Heart left ventricle (tissue), 16 donors: ENCODE measurements at regions of chrX and their contacts with region 1.

Region 1: DNA sequence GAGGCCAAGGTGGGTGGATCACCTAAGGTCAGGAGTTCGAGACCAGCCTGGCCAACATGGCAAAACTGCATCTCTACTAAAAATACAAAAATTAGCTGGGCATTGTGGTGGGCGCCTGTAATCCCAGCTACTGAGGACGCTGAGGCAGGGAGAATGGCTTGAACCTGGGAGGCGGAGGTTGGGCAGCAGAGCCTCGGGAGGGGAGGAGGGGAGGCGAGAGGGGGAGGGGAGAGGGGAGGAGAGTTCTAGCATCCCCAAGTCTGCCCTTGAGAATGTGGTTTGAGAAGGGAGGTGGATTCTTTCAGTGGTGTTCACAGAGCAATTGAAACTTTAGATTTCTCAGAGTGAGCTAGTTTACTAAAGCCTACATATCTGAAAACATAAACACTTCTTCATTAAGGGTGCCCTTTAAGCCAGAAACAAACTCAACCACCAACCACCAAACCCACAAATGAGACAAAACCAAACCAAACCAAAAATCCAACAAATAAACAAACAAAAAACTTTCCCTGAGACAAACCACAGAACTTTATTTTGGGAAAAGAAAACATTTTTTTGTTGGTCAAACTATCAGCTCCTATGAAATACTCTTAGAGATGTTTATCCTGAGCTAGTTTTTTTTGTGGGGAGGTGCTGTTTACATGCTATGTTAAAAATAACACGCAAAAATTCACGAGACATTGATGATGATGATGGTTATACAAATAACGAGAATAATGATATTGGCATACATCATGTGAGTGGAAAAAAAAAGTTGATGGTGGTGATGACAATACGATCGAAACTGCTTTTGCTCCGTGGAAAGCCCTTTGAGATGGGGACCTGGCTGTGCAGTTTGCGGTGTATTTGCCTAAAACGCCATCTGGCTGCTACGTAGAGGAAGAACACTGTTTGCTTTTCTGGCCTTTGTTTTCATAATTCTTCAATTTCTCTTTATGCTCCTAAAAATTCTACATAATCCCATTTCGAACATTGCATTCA is 98.2 kb upstream of the PRKX start:
- DNase-seq: peak in 2 of 5 donors; percentile 14 to 21
- ATAC-seq: no peak
- H3K4me3 ChIP-seq: no peak overlapping the region
- H3K27ac ChIP-seq: no peak overlapping the region
- H3K4me1 ChIP-seq: peaks cover 0 to 15% (median under 1%) of the 10 kb centered on the region in 12 donors
- H3K27me3 ChIP-seq: peaks cover 0 to 14% (median 0%) of the 10 kb centered on the region in 9 donors
- CTCF ChIP-seq: peak in 11 of 12 donors; percentile 32 to 62 (median 49)
- POLR2A ChIP-seq: no peak

Region 2: DNA sequence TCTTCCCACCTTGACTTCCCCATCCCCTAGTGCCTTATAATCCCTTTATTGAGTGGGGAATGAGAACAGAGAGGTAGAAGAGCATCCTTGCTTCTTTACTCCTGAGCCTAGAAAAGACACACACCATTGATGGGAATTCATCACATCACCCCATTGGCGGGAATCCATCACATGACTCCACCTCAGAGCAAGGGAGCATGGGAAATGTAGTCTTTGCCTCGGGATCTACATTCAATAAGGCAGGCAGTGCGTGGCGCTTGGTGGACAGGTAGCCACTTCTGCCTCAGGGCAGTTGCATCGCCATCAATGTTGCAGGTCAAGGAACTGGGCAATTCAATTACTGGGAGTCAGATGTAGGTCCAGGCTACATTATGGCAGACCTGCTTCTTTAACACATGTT is 515.9 kb before region 1 on chrX:
- intact Hi-C with region 1: no loop called
- DNase-seq: no peak
- ATAC-seq: no peak
- H3K4me3 ChIP-seq: no peak overlapping the region
- H3K27ac ChIP-seq: no peak overlapping the region
- H3K4me1 ChIP-seq: no peaks in the 10 kb centered on the region
- H3K27me3 ChIP-seq: no peaks in the 10 kb centered on the region
- CTCF ChIP-seq: no peak
- POLR2A ChIP-seq: no peak

Region 3: DNA sequence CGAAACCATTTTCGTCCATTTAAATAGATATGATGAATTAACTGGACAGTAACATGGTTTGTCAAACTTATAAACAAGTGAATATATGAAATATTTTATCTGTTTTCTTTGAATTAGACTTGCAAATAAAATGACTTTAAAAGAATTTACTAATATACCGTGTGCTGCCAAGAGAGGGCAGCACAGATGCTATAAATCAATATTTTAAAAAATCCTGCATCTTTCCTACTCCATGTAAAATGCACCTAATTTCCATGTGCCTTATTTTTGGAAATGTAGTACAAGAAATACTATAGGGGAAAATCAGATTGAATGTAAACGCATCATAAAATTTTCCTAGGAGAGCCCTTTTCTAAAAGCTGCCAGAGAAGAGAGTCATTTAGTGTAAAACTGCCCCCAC is 160.3 kb before region 1 on chrX:
- intact Hi-C with region 1: loop called in 5 of 10 experiments (anchors 1 to 5 kb)
- DNase-seq: no peak
- ATAC-seq: no peak
- H3K4me3 ChIP-seq: no peak overlapping the region
- H3K27ac ChIP-seq: no peak overlapping the region
- H3K4me1 ChIP-seq: no peaks in the 10 kb centered on the region
- H3K27me3 ChIP-seq: no peaks in the 10 kb centered on the region
- CTCF ChIP-seq: peak; percentile 25 to 60 (median 46)
- POLR2A ChIP-seq: no peak

Region 4: DNA sequence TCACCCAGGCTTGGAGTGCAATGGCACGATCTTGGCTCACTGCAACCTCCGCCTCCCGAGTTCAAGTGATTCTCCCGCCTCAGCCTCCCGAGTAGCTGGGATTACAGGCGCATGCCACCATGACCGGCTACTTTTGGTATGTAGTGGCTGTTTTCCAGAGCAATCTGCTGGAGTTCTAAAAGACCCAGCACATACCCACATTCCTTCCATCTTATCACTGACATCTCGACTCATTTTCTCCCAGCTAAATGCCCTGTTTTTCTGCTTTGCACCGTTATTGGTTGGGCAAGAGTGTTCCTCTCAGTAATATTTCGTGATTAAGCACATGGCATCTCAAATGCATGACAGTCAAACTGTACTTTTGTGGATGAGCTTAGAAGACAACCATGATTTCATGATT is 151.9 kb before region 1 on chrX:
- intact Hi-C with region 1: loop called in 4 of 10 experiments (anchors 5 kb)
- DNase-seq: no peak
- ATAC-seq: no peak
- H3K4me3 ChIP-seq: no peak overlapping the region
- H3K27ac ChIP-seq: no peak overlapping the region
- H3K4me1 ChIP-seq: no peaks in the 10 kb centered on the region
- H3K27me3 ChIP-seq: no peaks in the 10 kb centered on the region
- CTCF ChIP-seq: no peak
- POLR2A ChIP-seq: no peak

Region 5: DNA sequence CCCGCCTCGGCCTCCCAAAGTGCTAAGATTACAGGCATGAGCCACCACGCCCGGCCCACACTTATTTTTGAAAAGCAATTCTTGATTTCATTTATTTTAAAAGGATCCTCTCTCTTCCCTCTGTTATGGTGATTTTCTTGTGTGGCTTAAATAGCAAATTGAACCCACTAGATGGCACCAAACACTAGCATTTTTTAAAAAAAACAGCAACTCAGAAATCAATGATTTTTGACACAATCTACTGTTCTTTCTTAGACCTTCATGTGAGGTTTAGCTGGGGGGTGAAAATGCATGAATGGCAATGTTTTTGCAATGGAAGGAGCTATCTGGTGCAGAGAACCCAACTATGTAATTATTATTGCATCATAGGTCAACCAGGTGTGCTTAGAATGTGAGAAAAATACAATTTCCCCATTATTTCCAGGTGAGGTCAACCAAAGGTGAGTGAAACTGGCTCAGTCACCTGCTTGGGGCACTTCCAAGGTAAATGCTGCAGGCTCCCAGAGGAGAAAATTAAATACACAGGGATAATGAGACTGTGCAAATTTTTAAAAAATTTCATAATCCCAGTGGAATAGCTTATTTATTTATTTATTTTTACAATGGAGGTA is 128.5 kb after region 1 on chrX:
- intact Hi-C with region 1: no loop called
- DNase-seq: no peak
- ATAC-seq: no peak
- H3K4me3 ChIP-seq: no peak overlapping the region
- H3K27ac ChIP-seq: no peak overlapping the region
- H3K4me1 ChIP-seq: no peaks in the 10 kb centered on the region
- H3K27me3 ChIP-seq: peaks cover 0 to 4% (median 0%) of the 10 kb centered on the region in 9 donors
- CTCF ChIP-seq: peak in 7 of 12 donors; percentile 9 to 33 (median 25)
- POLR2A ChIP-seq: no peak